ENCODE measurements at regions of chr2 and their contacts with region 1.

Region 1: DNA sequence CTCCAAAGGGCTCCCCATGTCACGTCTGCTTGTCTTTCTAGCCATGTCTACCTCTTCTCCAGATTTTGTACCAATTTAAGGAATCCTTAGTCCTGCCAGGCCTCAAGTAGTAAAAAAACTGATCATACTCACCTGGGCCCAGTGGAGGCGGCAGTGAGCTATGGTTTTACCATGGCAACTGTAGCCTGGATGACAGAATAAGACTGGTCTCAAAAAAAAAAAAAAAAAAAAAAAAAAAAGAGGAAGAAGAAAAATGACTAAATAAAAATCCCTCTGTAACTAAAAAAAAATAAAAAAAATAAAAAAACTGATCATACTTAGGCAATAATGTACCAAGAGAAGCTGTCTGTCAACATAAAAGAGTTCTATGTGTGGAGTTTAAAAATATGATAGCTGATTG is 221.6 kb downstream of the NR4A2 start:
- DNase-seq: peak; percentile 26
- H3K4me3 ChIP-seq: no peak overlapping the region
- H3K27ac ChIP-seq: no peak overlapping the region
- H3K4me1 ChIP-seq: peaks cover 12% of the 10 kb centered on the region
- H3K27me3 ChIP-seq: no peaks in the 10 kb centered on the region
- CTCF ChIP-seq: peak; percentile 13 to 44

Region 2: GRCh38 chr2:156031121-156031520 is 79.8 kb before region 1 on chr2:
- CTCF ChIA-PET with region 1: no interaction called
- dilution Hi-C with region 1: no loop called
- in situ Hi-C with region 1: no loop called
- intact Hi-C with region 1: no loop called
- DNase-seq: peak; percentile 17
- H3K4me3 ChIP-seq: no peak overlapping the region
- H3K27ac ChIP-seq: no peak overlapping the region
- H3K4me1 ChIP-seq: no peaks in the 10 kb centered on the region
- H3K27me3 ChIP-seq: no peaks in the 10 kb centered on the region
- CTCF ChIP-seq: no peak

Region 3: GRCh38 chr2:156182141-156182540 is 71.3 kb after region 1 on chr2:
- CTCF ChIA-PET with region 1: no interaction called
- dilution Hi-C with region 1: no loop called
- in situ Hi-C with region 1: no loop called
- intact Hi-C with region 1: loop called (anchors 2 kb)
- DNase-seq: peak; percentile 96
- H3K4me3 ChIP-seq: no peak overlapping the region
- H3K27ac ChIP-seq: peak overlapping the region; percentile 63
- H3K4me1 ChIP-seq: peaks cover 16% of the 10 kb centered on the region
- H3K27me3 ChIP-seq: no peaks in the 10 kb centered on the region
- CTCF ChIP-seq: no peak

Region 4: GRCh38 chr2:156192468-156192867 is 81.6 kb after region 1 on chr2:
- CTCF ChIA-PET with region 1: interaction called, 16 read pairs
- dilution Hi-C with region 1: no loop called
- in situ Hi-C with region 1: no loop called
- intact Hi-C with region 1: no loop called
- DNase-seq: no peak
- H3K4me3 ChIP-seq: no peak overlapping the region
- H3K27ac ChIP-seq: no peak overlapping the region
- H3K4me1 ChIP-seq: no peaks in the 10 kb centered on the region
- H3K27me3 ChIP-seq: no peaks in the 10 kb centered on the region
- CTCF ChIP-seq: peak in 1 of 2 donors; percentile 39

Region 5: GRCh38 chr2:156332534-156333273 is 221.8 kb after region 1 on chr2 and contains the start of gene NR4A2:
- CTCF ChIA-PET with region 1: interaction called, 10 read pairs
- dilution Hi-C with region 1: no loop called
- in situ Hi-C with region 1: no loop called
- intact Hi-C with region 1: loop called (anchors 5 kb)
- DNase-seq: peak; percentile 92
- H3K4me3 ChIP-seq: peak within 1 kb of the TSS; percentile 66 to 86 (median 80)
- H3K27ac ChIP-seq: peak within 1 kb of the TSS; percentile 95
- H3K4me1 ChIP-seq: peaks cover 23% of the 10 kb centered on the region
- H3K27me3 ChIP-seq: no peaks in the 10 kb centered on the region
- CTCF ChIP-seq: no peak
- total RNA-seq, gene NR4A2: 0.50 to 1.3 TPM